ENCODE measurements at regions of chr1 and their contacts with region 1.

Region 1: GRCh38 chr1:216566641-216567205 is 143.5 kb upstream of the USH2A start:
- DNase-seq: peak; percentile 68

Region 2: DNA sequence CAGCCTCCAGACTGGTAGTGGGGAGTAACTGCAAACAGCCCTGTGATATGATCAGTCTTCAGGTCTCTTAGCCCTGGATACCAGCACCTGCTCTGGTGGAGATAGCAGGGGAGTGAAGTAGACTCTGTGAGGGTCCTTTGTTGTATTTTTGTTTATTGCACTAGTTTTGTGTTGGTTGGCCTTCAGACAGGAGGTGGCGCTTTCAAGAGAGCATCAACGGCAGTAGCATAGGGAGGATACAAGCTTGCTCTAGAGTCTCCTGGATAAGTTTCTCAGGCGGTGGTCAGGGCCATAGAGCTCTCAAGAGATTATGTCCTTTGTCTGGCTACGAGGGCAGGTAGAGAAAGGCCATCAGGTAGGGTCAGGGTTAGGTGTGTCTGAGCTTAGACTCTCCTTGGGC is 259.9 kb before region 1 on chr1:
- in situ Hi-C with region 1: loop called (anchors 10 kb)
- DNase-seq: peak; percentile 42

Region 3: GRCh38 chr1:216665406-216665805 is 98.7 kb after region 1 on chr1:
- in situ Hi-C with region 1: no loop called
- DNase-seq: no peak

Region 4: DNA sequence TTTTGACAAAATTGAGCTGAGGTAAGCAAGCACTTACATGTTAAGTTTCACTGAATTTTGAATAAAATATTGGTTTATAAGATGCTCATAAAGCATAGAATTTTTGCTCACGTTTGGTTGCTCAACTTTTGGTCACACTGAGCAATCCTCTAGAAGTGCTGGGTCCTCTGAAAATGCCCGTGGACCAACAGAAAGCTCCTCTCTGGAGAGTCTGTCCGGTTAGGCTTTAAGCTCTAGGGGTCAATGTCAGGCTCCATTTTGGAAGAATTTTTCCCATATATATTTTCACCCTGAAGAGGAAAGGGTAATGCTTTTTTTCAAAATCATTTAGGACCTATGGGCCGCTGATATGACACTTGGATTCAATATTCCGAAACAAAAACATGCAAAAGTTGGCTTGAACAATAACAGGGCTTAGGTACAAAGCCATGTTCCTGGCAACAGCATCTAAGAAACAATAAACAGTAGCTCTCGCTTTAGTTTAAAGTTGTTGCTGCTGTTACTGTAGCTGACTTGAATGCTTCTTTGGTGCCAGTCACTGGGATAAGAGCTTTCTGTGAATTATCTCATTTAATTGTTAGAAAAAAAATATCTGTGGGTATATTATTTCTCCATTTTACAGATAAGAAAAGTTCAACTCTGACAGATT is 288.2 kb after region 1 on chr1:
- in situ Hi-C with region 1: no loop called
- DNase-seq: no peak

Measured in SK-MEL-5 (cell line).